CD4-positive, alpha-beta memory T cell (primary cell): ENCODE measurements at regions of chr4 and their contacts with region 1.

Region 1: DNA sequence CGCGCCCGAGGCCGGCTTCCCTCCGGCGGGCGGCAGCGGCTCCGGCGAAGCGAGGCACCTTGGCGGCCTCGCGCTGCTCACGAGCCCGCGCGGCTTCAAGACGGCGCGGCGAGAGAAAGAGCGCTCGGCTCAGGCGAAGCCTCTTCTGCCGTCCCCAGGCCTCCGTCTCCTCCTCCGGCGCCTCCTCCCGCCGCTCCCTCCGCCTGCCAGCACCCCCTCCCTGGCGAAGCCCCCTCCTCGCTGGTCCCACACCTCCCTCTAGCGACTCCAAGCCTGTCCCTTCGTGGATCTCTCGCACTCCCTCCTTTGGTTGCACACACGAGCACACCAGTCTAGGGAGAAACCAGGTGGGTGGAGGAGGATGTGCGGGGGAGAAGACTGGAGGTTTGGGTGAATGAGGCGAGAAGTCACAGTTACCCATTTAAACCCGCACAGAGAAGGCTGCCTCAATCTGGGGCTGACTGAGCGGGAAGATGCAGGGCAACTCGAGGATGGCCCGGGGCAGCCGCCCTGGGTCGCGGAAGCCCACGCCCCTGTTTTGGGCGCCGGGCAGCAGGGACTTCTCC is at the start of gene CAMK2D:
- DNase-seq: peak; percentile 82 to 93 (median 85)
- H3K4me3 ChIP-seq: peak within 1 kb of the TSS; percentile 73 to 87
- H3K4me3 Mint-ChIP-seq: peak within 1 kb of the TSS; percentile 93 to 98 (median 96)
- H3K27ac ChIP-seq: peak within 1 kb of the TSS; percentile 92
- H3K27ac Mint-ChIP-seq: peak within 1 kb of the TSS; percentile 91 to 100 (median 99)
- H3K4me1 ChIP-seq: peaks cover 36% of the 10 kb centered on the region
- H3K4me1 Mint-ChIP-seq: peaks cover 24 to 54% (median 25%) of the 10 kb centered on the region in 4 donors
- H3K27me3 ChIP-seq: no peaks in the 10 kb centered on the region
- H3K27me3 Mint-ChIP-seq: no peaks in the 10 kb centered on the region
- total RNA-seq, gene CAMK2D: 32.1 to 36.4 TPM

Region 2: GRCh38 chr4:112636688-112637551 is 1124.8 kb before region 1 on chr4 and contains the starts of genes LARP7 and ZGRF1:
- CTCF ChIA-PET with region 1: no interaction called
- POLR2A ChIA-PET with region 1: no interaction called
- intact Hi-C with region 1: loop called (anchors 2 kb)
- DNase-seq: peak; percentile 99
- H3K4me3 ChIP-seq: peak within 1 kb of the TSS; percentile 71 to 96
- H3K4me3 Mint-ChIP-seq: peak within 1 kb of the TSS in 3 of 8 donors; percentile 2 to 39 (median 27)
- H3K27ac ChIP-seq: peak within 1 kb of the TSS; percentile 93
- H3K27ac Mint-ChIP-seq: peak within 1 kb of the TSS in 1 of 7 donors; percentile 53
- H3K4me1 ChIP-seq: peaks cover 23% of the 10 kb centered on the region
- H3K4me1 Mint-ChIP-seq: peaks cover 13 to 25% (median 22%) of the 10 kb centered on the region in 4 donors
- H3K27me3 ChIP-seq: no peaks in the 10 kb centered on the region
- H3K27me3 Mint-ChIP-seq: no peaks in the 10 kb centered on the region
- total RNA-seq, gene LARP7: 44.1 to 47.9 TPM
- total RNA-seq, gene ZGRF1: 6.2 to 7.6 TPM

Region 3: GRCh38 chr4:113547487-113548042 is 214.1 kb before region 1 on chr4:
- CTCF ChIA-PET with region 1: interaction called, 24 read pairs
- POLR2A ChIA-PET with region 1: interaction called, 30 read pairs
- intact Hi-C with region 1: loop called (anchors 1 kb)
- DNase-seq: peak; percentile 86 to 94 (median 89)
- H3K4me3 ChIP-seq: no peak overlapping the region
- H3K4me3 Mint-ChIP-seq: peak overlapping the region in 1 of 8 donors; percentile 20
- H3K27ac ChIP-seq: no peak overlapping the region
- H3K27ac Mint-ChIP-seq: peak overlapping the region; percentile 0 to 81 (median 50)
- H3K4me1 ChIP-seq: peaks cover 11% of the 10 kb centered on the region
- H3K4me1 Mint-ChIP-seq: peaks cover 9 to 20% (median 10%) of the 10 kb centered on the region in 4 donors
- H3K27me3 ChIP-seq: no peaks in the 10 kb centered on the region
- H3K27me3 Mint-ChIP-seq: no peaks in the 10 kb centered on the region

Region 4: DNA sequence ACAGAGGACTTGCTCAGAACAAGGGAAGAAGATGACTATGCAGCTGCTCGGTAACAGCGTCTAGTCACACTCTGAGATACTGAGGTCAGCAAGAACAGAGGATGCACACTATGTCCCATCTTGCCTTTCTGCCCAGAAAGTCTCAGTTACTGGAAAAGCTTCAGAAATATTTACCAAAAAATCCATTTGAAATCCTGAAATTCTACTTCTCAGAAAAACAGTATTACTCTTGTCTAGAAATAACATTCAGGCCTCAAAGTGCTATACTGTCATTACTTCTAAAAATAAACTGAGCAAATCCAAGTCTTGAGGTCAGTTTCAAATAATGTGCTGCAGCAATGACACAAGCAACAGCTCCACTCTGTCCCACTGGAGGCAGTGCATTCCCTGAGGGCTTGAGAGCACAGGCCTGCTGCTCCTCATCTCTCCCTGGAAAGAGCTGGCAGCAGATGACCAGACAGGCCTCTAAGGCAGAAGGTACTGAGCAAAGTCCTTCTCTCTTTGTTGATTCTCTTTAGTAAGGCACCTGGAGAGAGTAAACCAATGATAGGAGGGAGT is 77.1 kb before region 1 on chr4:
- CTCF ChIA-PET with region 1: interaction called, 4 read pairs
- POLR2A ChIA-PET with region 1: interaction called, 8 read pairs
- intact Hi-C with region 1: loop called (anchors 1 kb)
- DNase-seq: no peak
- H3K4me3 ChIP-seq: no peak overlapping the region
- H3K4me3 Mint-ChIP-seq: peak overlapping the region in 4 of 8 donors; percentile 12 to 82 (median 50)
- H3K27ac ChIP-seq: no peak overlapping the region
- H3K27ac Mint-ChIP-seq: peak overlapping the region in 6 of 7 donors; percentile 48 to 96 (median 83)
- H3K4me1 ChIP-seq: peaks cover 40% of the 10 kb centered on the region
- H3K4me1 Mint-ChIP-seq: peaks cover 42 to 54% (median 47%) of the 10 kb centered on the region in 4 donors
- H3K27me3 ChIP-seq: no peaks in the 10 kb centered on the region
- H3K27me3 Mint-ChIP-seq: no peaks in the 10 kb centered on the region

Region 5: GRCh38 chr4:113790478-113790877 is 28.8 kb after region 1 on chr4:
- CTCF ChIA-PET with region 1: no interaction called
- POLR2A ChIA-PET with region 1: no interaction called
- intact Hi-C with region 1: no loop called
- DNase-seq: no peak
- H3K4me3 ChIP-seq: no peak overlapping the region
- H3K4me3 Mint-ChIP-seq: no peak overlapping the region
- H3K27ac ChIP-seq: no peak overlapping the region
- H3K27ac Mint-ChIP-seq: no peak overlapping the region
- H3K4me1 ChIP-seq: no peaks in the 10 kb centered on the region
- H3K4me1 Mint-ChIP-seq: no peaks in the 10 kb centered on the region
- H3K27me3 ChIP-seq: no peaks in the 10 kb centered on the region
- H3K27me3 Mint-ChIP-seq: peaks cover 0 to 1% of the 10 kb centered on the region in 2 donors

Region 6: DNA sequence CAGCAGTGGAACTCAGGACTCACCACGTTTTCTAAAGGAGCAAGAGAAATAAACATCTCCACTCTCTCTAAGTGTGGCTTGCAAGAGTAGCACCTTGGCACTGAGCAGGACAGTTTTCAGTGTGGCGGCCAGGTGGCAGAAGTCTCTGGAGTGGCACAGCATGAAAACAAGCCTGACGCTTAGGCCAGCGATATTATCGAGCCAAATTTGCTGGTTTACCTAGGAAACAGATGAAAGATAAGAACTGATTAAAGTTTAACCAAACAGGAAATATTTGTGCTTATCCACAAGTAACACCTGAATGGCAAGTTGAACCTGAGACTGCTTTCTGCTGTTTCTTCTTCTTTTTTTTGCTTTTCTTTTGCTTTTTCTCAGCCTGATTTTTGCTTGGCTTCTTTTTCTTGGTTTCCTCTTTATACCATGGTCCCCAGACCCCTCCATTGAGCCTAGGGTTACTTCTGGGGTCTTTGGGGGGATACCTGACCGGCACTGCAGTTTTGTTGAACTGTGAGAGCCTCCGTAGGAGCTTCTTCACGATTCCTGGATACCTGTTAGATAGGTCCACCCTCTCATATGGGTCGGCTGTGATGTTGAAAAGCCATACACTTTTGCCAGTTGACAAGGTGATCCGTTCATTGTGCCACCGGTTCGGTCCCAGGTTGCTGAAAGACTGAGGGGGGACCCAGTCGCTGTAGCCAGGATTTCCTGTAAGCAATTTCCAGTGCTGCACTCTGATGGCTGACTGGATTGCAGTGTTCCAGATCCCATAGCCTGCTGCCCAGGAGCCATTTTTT is 140.5 kb after region 1 on chr4:
- CTCF ChIA-PET with region 1: interaction called, 4 read pairs
- POLR2A ChIA-PET with region 1: interaction called, 12 read pairs
- intact Hi-C with region 1: loop called (anchors 1 kb)
- DNase-seq: peak; percentile 81 to 87 (median 85)
- H3K4me3 ChIP-seq: peak overlapping the region; percentile 19 to 33
- H3K4me3 Mint-ChIP-seq: peak overlapping the region; percentile 67 to 89 (median 78)
- H3K27ac ChIP-seq: peak overlapping the region; percentile 45
- H3K27ac Mint-ChIP-seq: peak overlapping the region; percentile 69 to 98 (median 89)
- H3K4me1 ChIP-seq: peaks cover 94% of the 10 kb centered on the region
- H3K4me1 Mint-ChIP-seq: peaks cover 49 to 77% (median 66%) of the 10 kb centered on the region in 4 donors
- H3K27me3 ChIP-seq: no peaks in the 10 kb centered on the region
- H3K27me3 Mint-ChIP-seq: no peaks in the 10 kb centered on the region